Ascending aorta (tissue), 2 donors: ENCODE measurements at regions of chr4 and their contacts with region 1.

Region 1: DNA sequence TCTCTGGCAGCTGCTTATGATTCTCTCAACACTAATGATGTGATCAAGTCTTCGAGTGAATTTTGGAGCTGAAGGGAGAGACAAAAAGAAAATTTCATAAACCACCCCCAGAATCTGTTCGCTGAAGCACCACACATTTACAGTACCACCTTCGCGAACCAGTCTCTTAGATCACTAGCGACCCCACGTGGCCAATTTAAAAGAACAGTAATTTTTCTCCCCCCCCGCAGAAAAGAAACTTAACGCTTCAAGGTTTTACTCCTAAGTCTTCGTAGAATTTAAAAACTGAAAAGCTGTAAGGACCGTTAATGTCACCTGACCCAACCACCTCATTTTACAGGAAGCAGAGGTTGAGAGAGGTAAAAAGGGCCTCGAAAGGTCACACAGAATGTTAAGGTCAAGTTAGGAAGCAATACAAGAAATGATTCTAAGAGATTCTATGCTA is 187.5 kb downstream of the QDPR start:
- DNase-seq: no peak
- H3K4me3 ChIP-seq: no peak overlapping the region
- H3K27ac ChIP-seq: no peak overlapping the region
- H3K4me1 ChIP-seq: peaks cover 0 to 7% of the 10 kb centered on the region in 2 donors
- H3K27me3 ChIP-seq: no peaks in the 10 kb centered on the region
- CTCF ChIP-seq: peak; percentile 50 to 80 (median 58)

Region 2: DNA sequence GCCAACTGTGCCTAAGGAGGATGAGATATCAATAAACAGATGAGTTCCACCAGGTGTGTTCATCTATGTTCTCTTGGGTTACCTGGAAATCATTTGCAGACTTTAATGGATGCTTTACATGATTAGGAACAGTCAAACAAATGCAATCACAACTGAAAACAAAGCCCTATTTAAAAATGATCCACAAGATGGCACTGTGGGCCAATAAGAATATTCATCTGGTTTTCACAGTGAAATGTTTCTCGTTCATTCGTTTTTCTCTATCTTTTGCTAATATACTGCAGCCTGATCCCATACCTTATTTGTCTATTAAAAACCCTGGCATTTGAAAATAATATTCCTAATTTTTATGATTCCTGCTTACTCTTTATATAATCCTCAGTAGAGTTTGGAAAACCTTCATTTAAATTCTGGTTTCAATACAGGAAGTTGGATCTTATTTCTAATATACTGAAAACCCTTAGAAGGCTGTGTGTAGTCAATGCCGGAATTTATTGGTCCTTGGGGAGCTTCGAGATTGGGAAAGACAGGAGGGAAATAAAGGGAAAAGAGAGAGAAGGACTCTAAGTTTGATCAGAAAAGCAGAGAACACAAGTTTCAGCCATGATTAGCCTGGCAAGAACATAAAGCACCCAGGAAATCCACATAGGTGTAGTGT is 1034.4 kb before region 1 on chr4:
- intact Hi-C with region 1: loop called (anchors 1 kb)
- DNase-seq: no peak
- H3K4me3 ChIP-seq: no peak overlapping the region
- H3K27ac ChIP-seq: no peak overlapping the region
- H3K4me1 ChIP-seq: no peaks in the 10 kb centered on the region
- H3K27me3 ChIP-seq: no peaks in the 10 kb centered on the region
- CTCF ChIP-seq: peak in 2 of 3 experiments; percentile 47 to 63

Region 3: DNA sequence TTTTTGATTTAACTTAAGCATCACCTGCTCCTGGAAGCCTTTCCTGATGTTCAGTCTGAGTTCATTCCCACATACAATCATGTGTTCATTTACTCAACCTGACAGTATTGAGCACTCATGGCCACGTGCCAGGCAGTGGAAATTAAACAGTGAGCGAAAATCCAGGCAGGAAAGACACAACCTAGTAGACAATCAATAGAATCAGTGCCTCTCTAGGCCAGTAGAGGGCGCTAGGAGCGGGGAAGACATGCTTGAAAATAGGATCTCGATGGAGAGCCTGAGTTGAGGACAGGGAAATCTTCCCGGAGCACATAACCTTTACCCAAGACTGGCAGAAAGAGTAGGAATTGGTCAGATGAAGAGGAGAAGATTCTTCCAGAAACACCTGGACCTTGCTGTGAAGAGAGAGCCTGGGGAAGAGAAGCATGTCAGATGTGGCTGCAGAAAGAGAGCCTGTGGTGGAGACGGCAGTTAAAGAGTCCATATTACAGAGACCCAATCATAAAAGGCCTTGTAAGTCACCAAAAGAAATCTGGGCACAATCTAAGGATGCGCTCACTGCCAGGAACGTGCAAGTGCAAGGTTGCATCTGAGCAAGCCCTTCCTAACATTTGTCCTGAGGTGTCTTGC is 529.5 kb before region 1 on chr4:
- intact Hi-C with region 1: loop called (anchors 10 kb)
- DNase-seq: peak in 1 of 2 donors; percentile 64
- H3K4me3 ChIP-seq: no peak overlapping the region
- H3K27ac ChIP-seq: no peak overlapping the region
- H3K4me1 ChIP-seq: no peaks in the 10 kb centered on the region
- H3K27me3 ChIP-seq: no peaks in the 10 kb centered on the region
- CTCF ChIP-seq: peak; percentile 38 to 56 (median 52)

Region 4: GRCh38 chr4:16916719-16917337 is 407.6 kb before region 1 on chr4:
- intact Hi-C with region 1: loop called (anchors 5 kb)
- DNase-seq: no peak
- H3K4me3 ChIP-seq: no peak overlapping the region
- H3K27ac ChIP-seq: no peak overlapping the region
- H3K4me1 ChIP-seq: no peaks in the 10 kb centered on the region
- H3K27me3 ChIP-seq: no peaks in the 10 kb centered on the region
- CTCF ChIP-seq: peak; percentile 27 to 57 (median 32)